Sigmoid colon (tissue), 7 donors: ENCODE measurements at regions of chr5 and their contacts with region 1.

Region 1: DNA sequence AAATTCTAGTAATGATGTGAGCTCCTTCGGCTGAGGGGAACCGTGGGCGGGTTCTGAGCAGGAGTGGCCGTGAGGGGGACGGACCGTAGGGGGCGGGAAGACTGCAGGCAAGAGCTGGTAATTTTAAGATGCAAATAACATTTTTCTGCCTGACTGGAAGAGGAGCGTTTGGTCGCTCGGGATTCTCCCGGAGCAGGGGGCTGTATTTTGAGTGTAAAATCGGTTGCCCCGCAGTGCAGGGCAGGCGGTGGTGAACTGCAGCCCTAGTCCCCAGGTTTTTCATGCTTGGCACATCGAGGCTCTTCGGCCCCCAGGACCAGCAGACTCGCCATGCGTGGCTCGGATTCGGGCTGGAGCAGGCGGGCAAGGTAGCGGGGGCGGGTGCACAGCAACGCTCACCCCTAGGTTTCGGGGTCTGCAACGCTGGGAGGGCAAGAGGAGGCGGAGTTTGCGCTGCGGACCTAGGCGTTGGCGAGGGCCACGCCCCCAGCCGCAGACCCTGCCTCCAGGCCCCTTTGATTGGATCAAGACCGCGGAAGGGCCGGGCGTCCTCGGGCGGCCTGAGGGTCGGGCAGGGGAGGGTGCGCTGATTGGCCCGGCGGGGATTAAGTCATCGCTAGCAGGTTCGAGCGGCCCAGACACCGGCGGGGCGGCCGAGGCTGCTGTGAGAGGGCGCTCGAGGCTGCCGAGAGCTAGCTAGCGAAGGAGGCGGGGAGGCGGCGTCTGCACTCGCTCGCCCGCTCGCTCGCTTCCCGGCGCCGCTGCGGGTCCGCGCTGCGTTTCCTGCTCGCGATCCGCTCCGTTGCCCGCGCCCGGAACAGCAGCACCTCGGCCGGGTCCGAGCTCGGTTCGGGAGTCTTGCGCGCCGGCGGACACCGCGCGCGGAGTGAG is at the start of gene ARHGAP26:
- DNase-seq: peak; percentile 99
- H3K4me3 ChIP-seq: peak within 1 kb of the TSS; percentile 61 to 81 (median 68)
- H3K27ac ChIP-seq: peak within 1 kb of the TSS; percentile 86 to 92 (median 90)
- H3K4me1 ChIP-seq: peaks cover 0 to 20% (median 10%) of the 10 kb centered on the region in 4 donors
- H3K27me3 ChIP-seq: no peaks in the 10 kb centered on the region
- CTCF ChIP-seq: peak in 1 of 4 experiments; percentile 38
- EP300 ChIP-seq: no peak
- POLR2A ChIP-seq: peak; percentile 89 to 97
- total RNA-seq, gene ARHGAP26: 13.3 to 25.5 (median 21.7) TPM

Region 2: DNA sequence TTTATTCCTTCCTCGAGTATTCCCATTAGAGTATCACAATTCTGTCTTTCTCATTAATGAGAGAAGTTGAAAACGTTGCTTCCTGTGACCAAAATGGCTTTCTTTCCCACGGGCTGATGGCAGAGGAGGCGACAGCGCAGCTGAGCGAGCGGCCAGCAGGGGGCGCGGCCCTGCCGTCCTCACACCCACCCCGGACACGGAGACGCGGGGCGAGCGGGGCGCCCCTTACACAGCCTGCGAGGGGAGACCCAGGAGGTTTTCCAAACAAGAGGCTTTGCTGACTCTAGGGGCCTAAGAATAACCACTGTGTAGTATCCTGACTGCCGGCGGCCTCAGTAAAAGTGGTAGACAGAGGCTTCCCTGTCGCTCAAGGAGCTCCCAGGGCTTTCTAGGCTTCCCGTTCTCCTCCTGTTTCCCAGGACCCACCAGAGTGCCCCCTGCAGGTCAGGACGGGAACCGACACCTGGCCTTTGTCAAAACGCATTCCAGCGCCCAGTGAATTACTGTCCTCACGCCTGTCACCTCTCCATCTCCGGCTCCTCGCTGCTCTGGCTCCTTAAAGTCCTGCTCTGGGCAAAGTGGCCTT is 56.8 kb before region 1 on chr5:
- intact Hi-C with region 1: loop called (anchors 2 kb)
- DNase-seq: peak; percentile 92
- H3K4me3 ChIP-seq: peak overlapping the region; percentile 29 to 56 (median 51)
- H3K27ac ChIP-seq: peak overlapping the region; percentile 67 to 83 (median 78)
- H3K4me1 ChIP-seq: peaks cover 0 to 12% (median 7%) of the 10 kb centered on the region in 4 donors
- H3K27me3 ChIP-seq: no peaks in the 10 kb centered on the region
- CTCF ChIP-seq: peak; percentile 82 to 99 (median 94)
- EP300 ChIP-seq: no peak
- POLR2A ChIP-seq: no peak

Region 3: DNA sequence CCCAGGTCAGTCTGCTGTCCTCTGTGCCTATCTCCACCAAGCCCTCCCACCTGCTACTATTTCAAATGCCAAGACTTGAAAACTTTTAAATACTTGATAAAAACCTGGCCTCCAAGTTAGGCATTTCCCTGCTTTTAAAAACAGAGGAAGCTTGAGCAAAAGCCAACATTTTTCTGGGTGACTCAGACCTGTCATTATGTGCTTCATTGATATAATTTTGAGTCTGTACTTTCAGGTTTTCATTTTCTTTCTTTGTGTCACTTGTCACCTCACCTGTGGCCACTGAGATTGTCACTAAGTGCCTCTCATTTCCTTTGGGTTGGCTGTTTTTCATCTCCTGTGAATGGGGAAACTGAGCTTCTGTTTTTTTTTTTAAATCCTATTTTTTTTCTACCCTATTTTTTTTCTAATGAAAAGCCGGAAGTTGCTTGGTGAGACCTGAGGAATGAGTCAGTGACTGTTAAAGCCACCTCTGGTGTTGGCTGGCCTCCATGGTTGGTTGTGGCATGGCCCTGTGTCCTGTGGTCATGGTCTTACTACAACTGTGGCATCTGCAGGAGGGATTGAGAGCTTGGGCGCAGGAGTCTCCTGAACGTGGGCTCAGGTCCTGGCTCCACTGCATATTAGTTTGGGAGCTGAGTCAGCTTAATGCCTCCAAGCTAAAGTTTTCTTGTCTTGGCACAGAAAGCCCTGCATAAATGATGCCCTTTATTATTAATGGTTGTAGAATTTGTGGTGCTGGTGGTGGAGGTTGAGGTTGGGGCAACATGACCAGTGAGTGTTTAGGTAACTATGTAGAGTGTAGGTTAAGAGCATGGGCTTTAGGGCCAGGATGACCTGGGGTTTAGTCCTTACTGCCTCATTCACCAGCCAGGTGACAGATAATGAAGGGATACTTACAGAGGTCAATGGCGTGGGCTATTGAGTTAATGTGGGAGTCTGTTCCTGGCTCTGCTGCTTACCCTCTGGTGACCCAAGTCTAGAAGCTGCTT is 57.1 kb after region 1 on chr5:
- intact Hi-C with region 1: loop called (anchors 5 kb)
- DNase-seq: no peak
- H3K4me3 ChIP-seq: no peak overlapping the region
- H3K27ac ChIP-seq: peak overlapping the region; percentile 28 to 50 (median 44)
- H3K4me1 ChIP-seq: peaks cover 0 to 63% (median 50%) of the 10 kb centered on the region in 4 donors
- H3K27me3 ChIP-seq: no peaks in the 10 kb centered on the region
- CTCF ChIP-seq: no peak
- EP300 ChIP-seq: no peak
- POLR2A ChIP-seq: no peak

Region 4: DNA sequence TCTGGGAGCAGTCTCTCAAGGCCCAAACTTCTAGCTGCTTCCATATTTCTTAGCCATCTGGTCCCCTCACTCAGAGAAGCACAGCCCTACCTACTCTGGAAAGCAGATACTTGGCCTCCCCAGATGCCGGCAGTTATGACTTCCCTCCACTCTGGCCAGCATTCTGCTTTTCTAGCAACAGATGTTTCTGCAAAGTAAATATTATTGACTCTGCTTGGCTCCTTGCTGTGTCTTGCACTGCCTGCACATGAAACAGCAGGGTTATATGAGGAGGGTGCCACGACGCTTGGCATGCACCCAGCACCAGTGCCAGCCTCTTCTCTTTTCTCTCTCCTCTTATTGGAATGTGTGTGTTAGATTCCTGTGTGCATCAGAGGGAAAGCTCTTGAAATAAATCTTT is 99.9 kb after region 1 on chr5:
- intact Hi-C with region 1: loop called (anchors 2 kb)
- DNase-seq: peak; percentile 75
- H3K4me3 ChIP-seq: no peak overlapping the region
- H3K27ac ChIP-seq: peak overlapping the region in 3 of 4 donors; percentile 5 to 51 (median 46)
- H3K4me1 ChIP-seq: peaks cover 0 to 40% (median 22%) of the 10 kb centered on the region in 4 donors
- H3K27me3 ChIP-seq: no peaks in the 10 kb centered on the region
- CTCF ChIP-seq: no peak
- EP300 ChIP-seq: no peak
- POLR2A ChIP-seq: no peak

Region 5: DNA sequence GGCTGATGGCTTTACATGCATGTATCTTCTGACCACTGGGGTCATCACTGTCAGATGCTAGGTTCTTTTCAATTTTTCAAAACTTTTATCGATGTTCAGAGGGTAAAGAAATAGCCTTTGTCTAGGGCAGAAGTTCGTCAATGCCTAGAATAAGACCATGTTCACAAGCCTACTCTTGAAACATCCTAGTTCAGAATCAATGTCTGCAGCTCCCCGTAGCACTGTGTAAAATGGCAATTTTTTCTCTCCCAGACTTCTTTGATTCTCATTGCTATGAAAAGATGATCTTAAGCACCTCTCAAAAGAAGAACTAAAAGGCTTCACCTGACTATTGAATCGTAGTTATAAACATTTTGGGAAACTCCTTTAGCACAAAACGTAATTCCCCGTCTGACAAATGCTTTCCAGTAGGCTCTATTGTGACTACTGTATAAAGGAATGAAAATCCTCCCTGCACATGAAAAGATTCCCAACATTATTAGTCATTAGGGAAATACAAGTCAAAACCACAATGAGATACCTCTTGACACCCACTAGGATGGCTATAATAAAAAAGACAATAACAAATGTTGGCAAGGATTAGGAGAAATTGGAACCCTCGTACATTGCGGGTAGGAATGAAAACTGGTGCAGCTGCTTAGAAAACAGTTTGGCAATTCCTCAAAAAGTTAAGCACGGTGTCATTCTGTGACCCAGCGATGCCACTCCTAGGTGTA is 263.7 kb after region 1 on chr5:
- intact Hi-C with region 1: no loop called
- DNase-seq: no peak
- H3K4me3 ChIP-seq: no peak overlapping the region
- H3K27ac ChIP-seq: peak overlapping the region in 2 of 4 donors; percentile 8 to 27
- H3K4me1 ChIP-seq: peaks cover 0 to 9% (median 4%) of the 10 kb centered on the region in 4 donors
- H3K27me3 ChIP-seq: no peaks in the 10 kb centered on the region
- CTCF ChIP-seq: no peak
- EP300 ChIP-seq: no peak
- POLR2A ChIP-seq: no peak

Region 6: DNA sequence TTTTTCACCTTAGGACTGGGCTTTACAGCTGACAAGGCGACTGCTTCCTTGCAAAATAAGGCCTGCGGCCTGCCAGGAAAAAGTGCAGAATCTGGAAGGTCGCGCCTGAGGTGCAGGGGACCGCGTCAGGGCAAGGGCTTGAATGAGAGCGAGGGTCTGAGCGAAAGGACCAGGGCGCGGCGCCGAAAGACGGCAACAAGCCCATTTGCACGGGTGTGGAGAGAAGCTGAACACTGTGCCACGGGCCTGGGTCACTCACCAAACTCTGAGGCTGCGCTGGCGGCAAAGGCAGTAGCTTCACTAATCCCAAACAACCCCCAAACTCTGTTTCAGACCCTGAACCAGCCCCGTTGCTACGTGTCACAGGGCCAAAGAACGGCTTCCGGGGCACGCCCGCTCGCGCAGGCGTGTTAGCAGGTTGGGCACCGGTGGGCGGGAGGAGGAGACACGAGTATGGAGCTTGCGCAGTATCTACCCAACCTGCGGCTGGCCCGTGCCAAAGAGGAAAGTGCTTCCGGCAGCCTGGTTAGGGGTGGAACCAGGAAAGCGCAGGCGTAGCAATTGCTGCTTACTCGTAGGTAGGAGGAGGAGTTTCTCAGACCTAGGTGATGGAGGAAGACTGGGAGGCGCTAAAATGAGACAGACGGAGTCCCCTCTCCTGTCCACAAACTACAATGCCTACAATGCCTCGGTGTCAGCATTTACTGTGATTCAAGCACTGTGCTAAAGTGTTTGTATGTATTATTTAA is 1400.5 kb after region 1 on chr5 and contains the starts of genes KCTD16 and YIPF5:
- intact Hi-C with region 1: loop called (anchors 5 kb)
- DNase-seq: peak; percentile 97
- H3K4me3 ChIP-seq: peak within 1 kb of the TSS; percentile 61 to 89 (median 68)
- H3K27ac ChIP-seq: peak within 1 kb of the TSS; percentile 68 to 82 (median 74)
- H3K4me1 ChIP-seq: peaks cover 0 to 32% (median 19%) of the 10 kb centered on the region in 4 donors
- H3K27me3 ChIP-seq: peaks cover 0 to 3% (median 0%) of the 10 kb centered on the region in 3 donors
- CTCF ChIP-seq: no peak
- EP300 ChIP-seq: peak in 1 of 4 donors; percentile 43
- POLR2A ChIP-seq: no peak
- total RNA-seq, gene KCTD16: under 0.01 to 0.71 (median 0.22) TPM
- total RNA-seq, gene YIPF5: 35.2 to 44.6 (median 39.6) TPM